Motor neuron (in vitro differentiated cells): ENCODE measurements at regions of chrX and their contacts with region 1.

Region 1: GRCh38 chrX:108537005-108537404 is 97.4 kb downstream of the COL4A5 start:
- ATAC-seq: peak in 3 of 8 experiments; percentile 38 to 60 (median 49)
- H3K4me3 ChIP-seq: no peak overlapping the region
- H3K27ac ChIP-seq: no peak overlapping the region
- H3K4me1 ChIP-seq: no peaks in the 10 kb centered on the region

Region 2: GRCh38 chrX:107589243-107589642 is 947.8 kb before region 1 on chrX:
- in situ Hi-C with region 1: no loop called
- ATAC-seq: no peak
- H3K4me3 ChIP-seq: no peak overlapping the region
- H3K27ac ChIP-seq: no peak overlapping the region
- H3K4me1 ChIP-seq: no peaks in the 10 kb centered on the region

Region 3: DNA sequence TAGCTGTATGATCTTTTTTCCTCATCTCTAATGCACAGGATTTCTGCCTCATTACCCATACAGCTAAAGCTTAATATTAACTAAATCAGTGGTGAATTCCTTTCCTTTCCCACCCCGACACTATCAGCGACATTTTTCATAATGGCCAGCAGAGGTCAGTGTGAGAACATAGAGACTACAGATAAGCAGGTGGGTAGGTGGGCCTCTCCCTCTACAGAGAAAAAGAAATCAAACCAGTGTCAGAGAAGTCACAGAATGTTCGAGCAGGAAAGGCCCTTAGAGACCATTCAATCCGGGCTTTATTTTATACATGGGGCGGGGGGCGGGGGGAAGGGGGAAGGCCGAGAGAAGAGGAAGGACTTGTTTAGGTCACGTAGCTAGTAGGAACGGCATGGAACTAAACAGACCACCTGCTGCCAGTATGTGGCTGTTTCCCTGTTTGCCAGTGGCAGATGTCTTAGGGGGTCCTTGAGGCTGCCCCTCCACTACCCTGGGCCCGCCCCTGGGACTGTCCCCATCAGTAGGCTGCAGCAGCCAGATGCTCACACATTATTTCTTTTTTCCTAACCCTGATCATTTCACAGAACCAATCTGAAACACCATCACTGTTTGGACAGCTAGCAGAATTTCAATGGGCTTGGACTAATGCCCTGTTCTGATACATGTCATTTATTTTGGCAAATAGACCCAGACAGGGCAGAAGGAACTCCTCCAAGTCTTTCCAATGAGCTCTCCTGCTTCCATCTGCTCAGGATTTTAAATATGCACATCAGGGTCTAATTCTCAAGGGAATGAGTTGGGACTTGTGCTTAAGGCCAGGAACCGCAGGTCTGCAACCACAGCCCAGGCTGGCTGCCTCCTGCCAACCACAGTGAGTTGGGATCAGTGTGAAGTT is 312.0 kb before region 1 on chrX:
- in situ Hi-C with region 1: loop called in 1 of 9 experiments (anchors 25 kb)
- ATAC-seq: peak; percentile 76 to 92 (median 88)
- H3K4me3 ChIP-seq: no peak overlapping the region
- H3K27ac ChIP-seq: peak overlapping the region in 1 of 2 donors; percentile 22
- H3K4me1 ChIP-seq: peaks cover 7% of the 10 kb centered on the region in 2 donors

Region 4: DNA sequence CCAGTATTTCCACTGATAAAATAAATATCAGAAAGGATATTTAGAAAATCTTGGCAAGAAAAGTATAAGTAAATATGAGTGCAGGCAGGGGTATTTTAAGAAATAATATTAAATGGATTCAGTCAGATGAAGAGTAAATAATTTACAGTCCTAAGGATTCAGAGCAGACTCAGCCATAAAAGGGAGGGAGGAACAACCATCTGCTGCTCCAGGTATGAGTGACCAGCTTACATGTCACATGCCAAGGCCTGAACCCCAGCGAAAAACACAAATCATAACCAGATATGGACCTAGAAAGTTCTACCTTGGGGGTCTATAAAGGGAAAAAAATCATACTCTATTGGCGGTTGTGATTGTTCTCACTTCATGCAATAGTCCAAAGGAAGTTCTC is 265.6 kb before region 1 on chrX:
- in situ Hi-C with region 1: no loop called
- ATAC-seq: no peak
- H3K4me3 ChIP-seq: no peak overlapping the region
- H3K27ac ChIP-seq: no peak overlapping the region
- H3K4me1 ChIP-seq: no peaks in the 10 kb centered on the region